A673 (cell line): ENCODE measurements at regions of chr11 and their contacts with region 1.

Region 1: DNA sequence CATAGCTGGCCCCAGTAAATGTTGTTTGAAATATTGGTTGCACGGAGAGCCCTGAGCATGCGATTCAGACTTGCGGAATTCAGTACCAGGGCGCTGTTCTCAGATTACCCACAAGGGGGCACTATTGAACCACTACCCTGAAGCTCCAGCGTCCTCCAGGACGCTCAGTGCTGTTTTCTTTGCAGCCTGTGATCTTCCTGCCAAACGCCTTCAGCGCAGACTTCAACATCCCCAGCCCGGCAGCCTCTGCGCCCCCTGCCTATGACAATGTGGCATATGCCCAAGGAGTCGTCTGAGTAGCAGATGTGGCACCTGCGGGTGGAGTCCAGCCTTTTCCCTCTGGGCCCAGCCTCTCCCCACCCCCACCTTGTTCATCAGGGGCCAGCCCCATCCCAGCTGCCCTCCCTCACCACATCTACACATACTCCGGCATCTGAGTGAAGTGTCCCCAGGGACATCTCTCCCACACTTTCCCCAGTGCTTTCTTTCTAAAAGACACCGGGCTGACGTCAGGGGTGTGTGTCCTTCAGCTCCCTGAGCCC is 9.6 kb upstream of the MS4A10 start:
- DNase-seq: peak; percentile 96
- H3K4me3 ChIP-seq: no peak overlapping the region
- H3K27ac ChIP-seq: no peak overlapping the region
- H3K4me1 ChIP-seq: peaks cover 7% of the 10 kb centered on the region
- H3K27me3 ChIP-seq: no peaks in the 10 kb centered on the region
- CTCF ChIP-seq: peak; percentile 96

Region 2: GRCh38 chr11:60265373-60266214 is 509.9 kb before region 1 on chr11:
- CTCF ChIA-PET with region 1: no interaction called
- POLR2A ChIA-PET with region 1: no interaction called
- intact Hi-C with region 1: loop called (anchors 10 kb)
- DNase-seq: peak; percentile 70
- H3K4me3 ChIP-seq: no peak overlapping the region
- H3K27ac ChIP-seq: no peak overlapping the region
- H3K4me1 ChIP-seq: no peaks in the 10 kb centered on the region
- H3K27me3 ChIP-seq: peaks cover 14% of the 10 kb centered on the region
- CTCF ChIP-seq: peak; percentile 74

Region 3: DNA sequence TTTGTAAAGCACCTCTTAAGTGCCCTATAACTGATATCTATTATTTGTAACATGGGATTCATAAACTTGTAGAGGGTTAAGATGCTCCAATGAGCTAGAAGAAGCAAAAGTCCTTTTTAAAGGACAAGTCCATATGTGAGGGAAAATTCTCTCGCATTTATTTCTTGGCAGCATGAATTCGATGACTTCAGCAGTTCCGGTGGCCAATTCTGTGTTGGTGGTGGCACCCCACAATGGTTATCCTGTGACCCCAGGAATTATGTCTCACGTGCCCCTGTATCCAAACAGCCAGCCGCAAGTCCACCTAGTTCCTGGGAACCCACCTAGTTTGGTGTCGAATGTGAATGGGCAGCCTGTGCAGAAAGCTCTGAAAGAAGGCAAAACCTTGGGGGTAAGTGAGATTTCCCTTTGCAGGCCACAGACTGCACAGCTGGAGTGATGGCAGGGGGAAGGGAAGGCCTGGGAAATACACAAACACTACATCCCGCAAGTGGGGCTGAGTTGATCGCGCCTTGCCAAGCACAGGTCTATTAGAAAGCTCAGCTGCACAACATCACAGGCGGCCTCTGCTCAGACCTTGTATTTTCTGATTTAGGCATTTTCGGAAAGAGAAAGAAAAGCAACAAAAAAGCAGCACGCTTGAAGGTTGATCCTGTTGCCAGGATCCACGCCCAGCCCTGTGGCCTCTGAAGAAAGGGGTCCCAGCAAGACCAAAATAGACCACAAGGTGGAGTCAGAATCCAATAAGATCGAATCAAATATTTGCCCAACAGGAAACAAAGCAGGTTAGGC is 74.6 kb before region 1 on chr11:
- CTCF ChIA-PET with region 1: no interaction called
- POLR2A ChIA-PET with region 1: no interaction called
- intact Hi-C with region 1: loop called (anchors 5 kb)
- DNase-seq: peak; percentile 66
- H3K4me3 ChIP-seq: no peak overlapping the region
- H3K27ac ChIP-seq: no peak overlapping the region
- H3K4me1 ChIP-seq: peaks cover 18% of the 10 kb centered on the region
- H3K27me3 ChIP-seq: no peaks in the 10 kb centered on the region
- CTCF ChIP-seq: peak; percentile 74

Region 4: GRCh38 chr11:60887556-60887955 is 112.1 kb after region 1 on chr11:
- CTCF ChIA-PET with region 1: interaction called, 8 read pairs
- POLR2A ChIA-PET with region 1: interaction called, 5 read pairs
- intact Hi-C with region 1: loop called (anchors 2 kb)
- DNase-seq: peak; percentile 40
- H3K4me3 ChIP-seq: no peak overlapping the region
- H3K27ac ChIP-seq: no peak overlapping the region
- H3K4me1 ChIP-seq: no peaks in the 10 kb centered on the region
- H3K27me3 ChIP-seq: no peaks in the 10 kb centered on the region
- CTCF ChIP-seq: peak; percentile 50

Region 5: DNA sequence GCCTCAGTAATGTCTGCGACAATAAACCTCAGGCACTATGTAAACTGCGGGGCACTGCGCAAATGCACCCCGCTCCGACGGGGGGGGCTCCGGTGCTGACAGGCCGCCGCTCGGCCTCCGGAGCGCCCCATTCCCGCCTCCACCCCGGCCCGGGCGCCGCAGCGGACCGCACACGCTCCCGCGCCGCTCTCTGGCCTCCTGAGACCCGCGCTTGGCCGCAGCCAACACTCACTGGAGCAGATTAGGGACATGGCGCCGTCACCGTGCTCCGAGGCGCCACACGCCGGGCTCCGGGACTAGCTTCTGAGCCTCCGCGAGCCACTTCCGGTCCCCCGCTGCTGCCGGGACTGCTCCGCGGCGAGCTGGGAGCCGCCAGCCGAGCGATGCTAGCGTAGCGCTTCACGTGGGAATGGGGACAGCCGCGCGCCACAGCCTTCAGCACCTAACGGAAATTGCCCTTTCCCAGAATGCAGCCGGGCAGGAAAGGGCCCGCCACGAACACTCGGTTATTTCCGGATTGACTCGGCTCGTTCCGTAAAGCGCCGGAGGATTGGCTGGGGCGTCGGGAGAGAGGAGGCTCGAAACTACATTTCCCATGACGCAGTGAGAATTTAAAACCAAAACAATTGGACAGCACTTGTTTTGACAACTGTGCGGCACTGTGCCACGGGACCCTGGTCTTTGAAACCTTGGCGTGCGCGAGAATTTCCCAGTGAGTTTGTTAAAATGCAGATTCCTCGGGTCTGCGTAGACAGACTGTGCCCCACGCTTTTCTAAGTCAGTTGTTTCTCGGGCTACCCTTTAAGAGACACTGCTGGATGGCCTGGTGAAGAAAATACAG is 130.9 kb after region 1 on chr11 and contains the start of gene PRPF19:
- CTCF ChIA-PET with region 1: interaction called, 3 read pairs
- POLR2A ChIA-PET with region 1: no interaction called
- intact Hi-C with region 1: loop called (anchors 5 kb)
- DNase-seq: peak; percentile 100
- H3K4me3 ChIP-seq: peak within 1 kb of the TSS; percentile 99
- H3K27ac ChIP-seq: peak within 1 kb of the TSS; percentile 98
- H3K4me1 ChIP-seq: peaks cover 18% of the 10 kb centered on the region
- H3K27me3 ChIP-seq: no peaks in the 10 kb centered on the region
- CTCF ChIP-seq: no peak
- total RNA-seq, gene PRPF19: 200 and 204 TPM in 2 replicates